CD8-positive, alpha-beta memory T cell (primary cell): ENCODE measurements at regions of chr11 and their contacts with region 1.

Region 1: DNA sequence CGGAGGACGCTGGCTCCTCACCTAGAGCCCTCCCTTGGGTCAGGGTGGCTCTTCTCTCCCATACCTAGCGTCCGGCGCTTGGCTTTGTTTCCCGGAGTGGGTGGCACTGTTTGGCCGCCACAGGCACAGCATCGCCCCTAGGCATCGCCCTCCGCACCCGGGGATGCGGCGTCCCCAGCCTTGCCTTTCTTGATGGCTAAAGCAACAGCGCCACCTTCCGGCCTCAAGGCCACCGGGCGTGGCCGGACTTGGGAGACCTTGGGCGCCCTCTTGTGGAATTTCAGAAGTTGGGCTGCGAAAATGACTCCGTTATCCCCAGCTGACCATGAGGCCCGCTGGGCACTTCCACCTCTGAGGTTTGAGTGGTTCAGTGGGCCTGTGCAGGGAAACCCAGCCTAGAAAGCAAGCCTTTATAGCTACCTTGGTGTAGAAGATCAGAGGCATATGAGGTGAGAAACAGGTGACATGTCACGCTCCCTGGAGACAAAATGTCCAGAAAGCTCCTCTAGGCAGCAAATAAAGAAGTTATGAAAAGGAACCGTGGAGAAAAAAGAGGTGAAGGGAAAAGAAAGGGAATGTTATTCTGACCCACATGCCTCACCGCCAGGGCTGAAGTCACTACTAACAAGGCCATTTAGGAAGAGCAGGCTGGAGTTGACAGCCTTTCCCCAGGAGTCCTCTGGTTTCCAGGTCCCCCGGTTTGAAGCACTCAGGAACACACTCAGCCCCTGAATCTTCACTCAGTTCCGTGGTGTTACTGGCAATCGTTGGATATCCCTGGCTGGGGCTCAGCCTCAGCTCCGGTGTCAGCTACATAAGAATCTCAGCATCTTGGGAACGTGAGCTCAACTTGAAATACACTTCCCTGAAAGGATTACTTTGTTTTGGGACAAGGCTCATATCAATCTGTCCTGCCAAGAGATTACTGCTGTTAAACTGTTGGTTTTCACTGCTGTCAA is 54.1 kb downstream of the SNX19 start:
- DNase-seq: peak; percentile 78 to 90 (median 81)
- H3K4me3 ChIP-seq: no peak overlapping the region
- H3K4me3 Mint-ChIP-seq: no peak overlapping the region
- H3K27ac ChIP-seq: no peak overlapping the region
- H3K27ac Mint-ChIP-seq: peak overlapping the region in 1 of 8 donors; percentile 33
- H3K4me1 ChIP-seq: peaks cover 4% of the 10 kb centered on the region
- H3K4me1 Mint-ChIP-seq: peaks cover 0 to 8% (median 5%) of the 10 kb centered on the region in 3 donors
- H3K27me3 ChIP-seq: no peaks in the 10 kb centered on the region
- H3K27me3 Mint-ChIP-seq: peaks cover under 1 to 2% of the 10 kb centered on the region in 2 donors

Region 2: DNA sequence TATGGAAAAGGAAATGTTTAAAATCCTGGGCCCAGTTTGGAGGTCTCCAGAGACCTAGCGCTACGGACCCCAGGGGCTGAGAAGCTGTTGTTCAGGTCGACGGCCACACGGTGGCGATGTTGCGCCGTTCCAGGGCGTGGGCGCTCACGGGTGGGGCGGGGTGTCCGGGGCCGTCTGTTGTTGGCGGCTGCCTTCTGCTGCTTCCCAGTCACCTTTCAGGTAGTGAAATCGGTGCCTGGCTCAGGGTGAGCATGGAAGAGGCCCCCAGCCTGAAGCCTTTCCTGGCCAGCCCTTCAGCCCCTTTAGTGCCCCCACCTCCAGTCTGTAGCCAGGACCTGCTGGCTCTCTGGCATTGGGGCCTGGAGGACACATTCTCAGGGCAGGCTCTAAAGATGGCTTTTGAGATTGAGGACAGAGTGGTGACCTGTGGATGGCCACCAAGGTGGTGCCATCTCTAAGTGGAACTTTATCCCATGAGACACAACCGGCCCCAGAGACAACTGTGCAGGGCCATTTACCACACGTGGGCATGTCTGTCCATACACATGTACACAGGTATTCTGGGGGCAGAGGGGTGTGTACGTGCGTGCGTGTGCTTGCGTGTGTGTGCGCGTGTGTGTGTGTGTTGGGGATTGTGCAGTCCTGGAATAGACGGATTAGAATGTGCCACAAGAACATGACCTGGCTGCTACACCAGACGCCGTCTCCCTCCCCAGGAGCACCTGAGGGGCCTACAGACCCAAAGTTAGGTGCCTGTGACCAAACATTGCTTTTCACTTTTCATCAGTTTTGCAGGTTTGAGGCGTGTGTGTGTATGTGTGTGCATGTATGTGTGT is 648.8 kb before region 1 on chr11:
- CTCF ChIA-PET with region 1: interaction called, 14 read pairs
- POLR2A ChIA-PET with region 1: no interaction called
- DNase-seq: peak; percentile 55 to 74 (median 59)
- H3K4me3 ChIP-seq: no peak overlapping the region
- H3K4me3 Mint-ChIP-seq: no peak overlapping the region
- H3K27ac ChIP-seq: no peak overlapping the region
- H3K27ac Mint-ChIP-seq: peak overlapping the region in 1 of 8 donors; percentile 76
- H3K4me1 ChIP-seq: peaks cover 8% of the 10 kb centered on the region
- H3K4me1 Mint-ChIP-seq: peaks cover 0 to 2% (median 0%) of the 10 kb centered on the region in 3 donors
- H3K27me3 ChIP-seq: no peaks in the 10 kb centered on the region
- H3K27me3 Mint-ChIP-seq: peaks cover 11 to 15% of the 10 kb centered on the region in 2 donors

Region 3: DNA sequence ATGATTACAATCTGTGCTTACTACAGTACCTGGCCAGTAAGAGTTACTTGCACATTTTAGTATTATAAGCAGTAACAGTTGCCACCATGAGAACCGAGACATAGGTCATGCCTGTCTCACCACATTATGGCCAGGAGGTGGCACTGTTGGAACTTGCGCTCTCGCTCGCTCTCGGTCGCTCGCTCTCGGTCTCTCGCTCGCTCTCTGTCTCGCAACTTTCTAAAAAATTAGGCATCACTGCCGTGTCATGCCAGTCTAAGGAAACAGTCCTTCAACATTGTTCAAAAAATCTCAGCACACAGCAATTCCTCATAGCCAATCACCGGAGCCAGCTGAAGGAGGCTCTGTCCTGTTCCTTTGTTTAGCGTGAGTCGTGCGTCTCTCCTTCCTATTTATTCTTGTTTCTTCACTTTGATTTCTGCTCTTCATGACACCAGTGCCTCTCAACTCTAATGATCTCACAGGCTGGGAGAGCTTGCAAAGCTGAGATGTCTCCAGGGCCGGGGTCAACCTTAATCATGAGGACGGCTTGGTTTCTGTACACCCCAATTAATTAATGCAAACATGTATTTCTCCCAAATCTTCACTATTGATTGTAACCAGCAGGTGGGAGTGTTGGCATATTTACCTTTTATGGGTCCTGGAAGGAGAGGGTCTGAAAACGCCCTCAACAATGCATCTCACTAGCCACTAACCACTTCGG is 427.5 kb before region 1 on chr11:
- CTCF ChIA-PET with region 1: interaction called, 115 read pairs
- POLR2A ChIA-PET with region 1: interaction called, 3 read pairs
- DNase-seq: peak; percentile 43 to 68 (median 58)
- H3K4me3 ChIP-seq: peak overlapping the region; percentile 77
- H3K4me3 Mint-ChIP-seq: no peak overlapping the region
- H3K27ac ChIP-seq: no peak overlapping the region
- H3K27ac Mint-ChIP-seq: no peak overlapping the region
- H3K4me1 ChIP-seq: peaks cover 9% of the 10 kb centered on the region
- H3K4me1 Mint-ChIP-seq: peaks cover 15 to 19% (median 15%) of the 10 kb centered on the region in 3 donors
- H3K27me3 ChIP-seq: peaks cover 8% of the 10 kb centered on the region
- H3K27me3 Mint-ChIP-seq: peaks cover 13 to 20% of the 10 kb centered on the region in 2 donors

Region 4: DNA sequence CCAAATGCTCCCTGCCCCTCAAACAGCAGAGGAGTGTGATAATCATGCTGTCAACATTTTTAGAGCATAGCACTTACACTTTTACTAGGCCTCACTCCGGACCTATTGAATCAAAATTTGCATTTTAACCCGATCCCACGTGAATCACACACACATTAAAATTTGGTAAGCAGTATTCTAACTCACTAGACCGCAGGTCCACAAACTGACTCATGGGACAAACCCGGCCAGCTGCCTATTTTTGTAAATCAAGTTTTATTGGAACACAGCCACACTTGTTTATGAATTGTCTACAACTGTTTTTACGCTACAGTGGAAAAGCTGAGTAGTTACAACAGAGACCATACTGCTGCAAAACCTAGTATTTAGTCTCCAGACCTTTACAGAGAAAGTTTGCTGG is 10.8 kb after region 1 on chr11:
- CTCF ChIA-PET with region 1: interaction called, 17 read pairs
- POLR2A ChIA-PET with region 1: no interaction called
- DNase-seq: no peak
- H3K4me3 ChIP-seq: no peak overlapping the region
- H3K4me3 Mint-ChIP-seq: no peak overlapping the region
- H3K27ac ChIP-seq: no peak overlapping the region
- H3K27ac Mint-ChIP-seq: peak overlapping the region in 2 of 8 donors; percentile 24 to 61
- H3K4me1 ChIP-seq: no peaks in the 10 kb centered on the region
- H3K4me1 Mint-ChIP-seq: no peaks in the 10 kb centered on the region
- H3K27me3 ChIP-seq: no peaks in the 10 kb centered on the region
- H3K27me3 Mint-ChIP-seq: no peaks in the 10 kb centered on the region

Region 5: DNA sequence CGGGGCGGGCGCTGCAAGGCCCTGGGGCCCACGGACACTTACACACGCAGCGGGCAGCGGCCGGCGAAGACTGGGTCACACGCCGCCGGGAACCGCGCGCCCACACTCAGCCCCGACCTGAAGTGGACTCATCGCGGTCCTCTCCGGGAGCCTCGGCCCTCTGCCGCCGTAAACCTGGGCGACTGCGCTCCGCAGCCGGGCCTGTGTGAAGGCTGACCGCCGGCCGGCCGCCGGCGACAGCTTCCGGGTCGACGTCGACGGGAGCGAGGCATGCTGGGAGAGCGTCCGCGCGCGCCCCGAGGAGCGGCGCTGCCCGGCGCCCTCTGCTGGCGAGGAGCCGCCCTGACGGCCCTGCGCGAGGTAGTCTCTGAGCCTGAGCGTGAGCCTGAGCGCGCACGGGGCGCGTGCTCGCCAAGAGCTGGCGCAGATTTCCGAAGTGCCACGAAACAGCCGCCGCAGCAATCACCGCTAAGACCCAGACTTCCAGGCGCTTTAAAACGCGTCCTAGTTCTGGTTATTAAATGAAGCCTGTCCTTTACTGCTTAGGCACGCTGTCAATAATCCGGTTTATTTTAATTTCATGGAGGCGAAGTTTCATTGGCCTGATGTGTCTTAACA is 54.2 kb after region 1 on chr11 and contains the start of gene SNX19:
- CTCF ChIA-PET with region 1: interaction called, 17 read pairs
- POLR2A ChIA-PET with region 1: no interaction called
- DNase-seq: peak; percentile 85 to 92 (median 87)
- H3K4me3 ChIP-seq: peak within 1 kb of the TSS; percentile 71
- H3K4me3 Mint-ChIP-seq: peak within 1 kb of the TSS; percentile 84 to 90 (median 89)
- H3K27ac ChIP-seq: peak within 1 kb of the TSS; percentile 86
- H3K27ac Mint-ChIP-seq: peak within 1 kb of the TSS; percentile 69 to 97 (median 94)
- H3K4me1 ChIP-seq: peaks cover 31% of the 10 kb centered on the region
- H3K4me1 Mint-ChIP-seq: peaks cover 17 to 51% (median 44%) of the 10 kb centered on the region in 3 donors
- H3K27me3 ChIP-seq: no peaks in the 10 kb centered on the region
- H3K27me3 Mint-ChIP-seq: peaks cover 9 to 30% of the 10 kb centered on the region in 2 donors
- total RNA-seq, gene SNX19: 41.2 to 44.4 TPM

Region 6: DNA sequence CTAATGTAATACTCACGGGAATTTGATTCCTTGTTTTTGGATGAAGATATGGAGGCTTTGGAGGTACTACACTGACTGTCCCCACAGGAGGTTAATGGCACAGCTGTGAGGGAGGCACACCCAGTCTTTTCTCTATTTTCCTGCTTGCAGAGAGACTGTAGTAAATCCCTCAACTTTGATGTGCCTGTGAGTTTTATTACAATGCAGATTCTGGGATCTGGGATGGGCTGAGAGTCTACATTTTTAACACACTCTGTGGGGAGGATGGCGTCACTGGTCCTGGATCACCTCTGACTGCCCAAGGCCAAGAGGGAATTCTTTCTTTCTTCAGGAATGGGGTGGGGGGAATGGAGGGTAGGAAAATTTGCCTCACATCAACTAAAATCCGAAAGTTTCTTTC is 428.0 kb after region 1 on chr11:
- CTCF ChIA-PET with region 1: no interaction called
- POLR2A ChIA-PET with region 1: no interaction called
- DNase-seq: no peak
- H3K4me3 ChIP-seq: no peak overlapping the region
- H3K4me3 Mint-ChIP-seq: no peak overlapping the region
- H3K27ac ChIP-seq: no peak overlapping the region
- H3K27ac Mint-ChIP-seq: no peak overlapping the region
- H3K4me1 ChIP-seq: no peaks in the 10 kb centered on the region
- H3K4me1 Mint-ChIP-seq: no peaks in the 10 kb centered on the region
- H3K27me3 ChIP-seq: no peaks in the 10 kb centered on the region
- H3K27me3 Mint-ChIP-seq: no peaks in the 10 kb centered on the region